ENCODE measurements at regions of chr2 and their contacts with region 1.

Region 1: DNA sequence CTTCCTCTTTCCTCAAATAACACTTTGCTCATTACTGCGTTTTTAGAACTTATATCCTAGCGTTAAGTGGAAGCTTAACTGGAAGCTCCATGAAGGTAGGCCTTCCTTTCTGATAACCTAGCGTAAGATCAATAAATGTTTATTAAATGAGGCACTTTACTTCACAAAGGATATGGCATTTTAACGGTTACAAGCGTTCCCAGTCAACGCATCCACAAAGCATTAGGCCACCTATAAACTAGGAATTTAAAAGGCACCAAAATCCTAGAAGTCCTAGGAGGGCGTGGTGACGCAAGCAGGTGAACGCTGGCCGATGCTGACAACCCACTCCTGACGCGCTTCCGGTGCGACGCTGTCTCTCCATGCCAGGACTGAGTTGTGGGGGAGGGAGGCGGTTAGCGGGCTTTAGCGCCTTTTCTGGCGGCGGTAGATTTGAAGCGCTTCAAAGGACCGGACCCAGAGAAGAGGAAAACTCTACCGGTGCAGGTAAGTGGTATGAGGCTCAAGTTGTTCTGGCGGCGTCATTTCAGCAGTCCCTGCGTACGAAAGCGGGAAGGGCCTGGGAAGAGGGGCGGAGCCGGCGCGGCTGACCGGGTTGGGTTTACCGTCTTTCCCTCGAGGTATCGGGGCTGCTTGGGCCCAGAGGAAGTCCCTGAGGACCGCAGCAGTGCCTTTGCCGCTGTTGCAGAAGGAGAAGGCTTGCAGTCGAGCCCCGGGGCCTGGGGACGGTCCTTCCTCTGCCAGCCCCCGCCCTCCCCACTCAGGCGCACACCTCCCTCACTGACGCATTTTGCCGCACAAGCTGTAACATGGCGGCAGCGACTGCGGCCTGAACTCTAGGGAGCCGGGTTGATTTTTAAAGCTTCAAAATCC is at the start of gene PPIG:
- DNase-seq: peak; percentile 95
- H3K4me3 Mint-ChIP-seq: peak within 1 kb of the TSS; percentile 95
- H3K27ac Mint-ChIP-seq: peak within 1 kb of the TSS; percentile 100
- H3K4me1 Mint-ChIP-seq: peaks cover 28% of the 10 kb centered on the region
- H3K27me3 Mint-ChIP-seq: peaks cover 5% of the 10 kb centered on the region
- total RNA-seq, gene PPIG: 59.9 and 69.3 TPM in 2 replicates

Region 2: DNA sequence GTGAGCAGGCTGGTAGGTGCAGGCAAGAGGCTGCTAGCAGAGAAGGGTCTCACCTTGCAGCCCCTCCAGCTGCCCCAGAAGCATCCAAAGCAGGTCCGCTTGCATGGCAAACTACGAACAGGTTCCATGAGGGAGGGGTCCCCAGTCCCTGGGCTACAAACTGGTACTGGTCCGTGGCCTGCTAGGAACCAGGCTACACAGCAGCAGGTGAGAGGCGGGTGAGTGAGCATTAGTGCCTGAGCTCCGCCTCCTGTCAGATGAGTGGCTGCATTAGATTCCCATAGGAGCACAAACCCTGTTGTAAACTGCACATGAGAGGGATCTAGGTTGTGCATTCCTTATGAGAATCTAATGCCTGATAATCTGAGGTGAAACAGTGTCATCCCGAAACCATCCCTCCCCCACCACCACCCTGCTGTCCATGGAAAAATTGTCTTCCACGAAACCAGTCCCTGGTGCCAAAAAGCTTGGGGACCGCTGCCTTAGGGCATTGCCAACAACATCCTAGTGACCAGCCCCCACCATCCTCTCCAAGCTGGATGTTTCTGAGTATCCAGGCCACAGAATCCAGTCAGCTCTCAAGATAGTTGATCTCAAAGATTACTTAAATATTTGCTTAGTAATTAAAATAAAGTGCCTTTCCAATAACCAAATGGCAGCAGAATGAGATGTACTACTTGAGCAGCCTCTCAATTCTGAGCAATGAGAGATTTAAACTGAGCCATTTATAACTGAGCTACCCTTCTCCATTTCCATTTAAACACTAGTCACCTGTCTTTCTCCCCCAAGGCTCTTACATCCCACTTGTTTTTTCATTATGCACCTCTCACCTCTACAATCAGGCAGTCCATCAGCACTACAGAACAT is 254.3 kb before region 1 on chr2:
- intact Hi-C with region 1: no loop called
- DNase-seq: no peak
- H3K4me3 Mint-ChIP-seq: no peak overlapping the region
- H3K27ac Mint-ChIP-seq: no peak overlapping the region
- H3K4me1 Mint-ChIP-seq: no peaks in the 10 kb centered on the region
- H3K27me3 Mint-ChIP-seq: peaks cover 4% of the 10 kb centered on the region

Region 3: DNA sequence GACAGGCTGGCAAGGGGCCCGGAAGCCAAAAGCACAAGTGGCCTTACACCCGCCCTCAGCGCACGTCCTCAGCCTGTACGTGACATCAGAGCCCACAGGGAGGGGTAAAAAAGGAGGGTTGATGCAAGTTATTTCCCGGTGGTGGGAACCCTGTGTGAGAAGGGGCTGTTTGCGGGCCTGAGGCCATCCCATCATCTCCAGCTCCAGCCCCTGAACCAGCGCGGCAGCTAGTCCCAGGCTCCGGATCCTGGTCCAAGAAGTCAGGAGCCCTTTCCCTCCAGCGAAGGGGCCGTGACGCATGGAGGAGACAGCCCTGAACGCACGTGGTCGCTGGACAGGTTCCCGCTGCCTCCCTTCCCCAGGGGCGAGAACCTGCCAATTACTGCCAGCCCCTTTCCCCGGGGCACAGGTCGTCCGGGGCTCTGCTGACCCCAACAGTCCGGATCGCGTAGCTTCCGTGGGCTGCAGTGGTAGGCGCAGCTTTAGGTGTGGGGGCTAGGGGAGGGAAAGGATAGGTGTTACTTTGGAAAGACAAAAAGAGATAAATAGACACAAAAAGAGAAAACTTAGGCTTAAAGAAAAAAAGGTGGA is 220.6 kb before region 1 on chr2:
- intact Hi-C with region 1: loop called (anchors 5 kb)
- DNase-seq: peak; percentile 86
- H3K4me3 Mint-ChIP-seq: peak overlapping the region; percentile 85
- H3K27ac Mint-ChIP-seq: peak overlapping the region; percentile 93
- H3K4me1 Mint-ChIP-seq: peaks cover 34% of the 10 kb centered on the region
- H3K27me3 Mint-ChIP-seq: peaks cover 53% of the 10 kb centered on the region

Region 4: GRCh38 chr2:169573160-169573973 is 10.9 kb before region 1 on chr2 and contains the start of gene FASTKD1:
- intact Hi-C with region 1: loop called (anchors 1 kb)
- DNase-seq: peak; percentile 95
- H3K4me3 Mint-ChIP-seq: peak within 1 kb of the TSS; percentile 94
- H3K27ac Mint-ChIP-seq: peak within 1 kb of the TSS; percentile 90
- H3K4me1 Mint-ChIP-seq: peaks cover 13% of the 10 kb centered on the region
- H3K27me3 Mint-ChIP-seq: peaks cover 2% of the 10 kb centered on the region
- total RNA-seq, gene FASTKD1: 55.2 and 56.5 TPM in 2 replicates

Region 5: GRCh38 chr2:169798718-169799592 is 214.7 kb after region 1 on chr2 and contains the start of gene SSB:
- intact Hi-C with region 1: loop called (anchors 1 kb)
- DNase-seq: peak; percentile 97
- H3K4me3 Mint-ChIP-seq: peak within 1 kb of the TSS; percentile 96
- H3K27ac Mint-ChIP-seq: peak within 1 kb of the TSS; percentile 96
- H3K4me1 Mint-ChIP-seq: peaks cover 20% of the 10 kb centered on the region
- H3K27me3 Mint-ChIP-seq: peaks cover 8% of the 10 kb centered on the region
- total RNA-seq, gene SSB: 113 TPM in 2 replicates

Region 6: DNA sequence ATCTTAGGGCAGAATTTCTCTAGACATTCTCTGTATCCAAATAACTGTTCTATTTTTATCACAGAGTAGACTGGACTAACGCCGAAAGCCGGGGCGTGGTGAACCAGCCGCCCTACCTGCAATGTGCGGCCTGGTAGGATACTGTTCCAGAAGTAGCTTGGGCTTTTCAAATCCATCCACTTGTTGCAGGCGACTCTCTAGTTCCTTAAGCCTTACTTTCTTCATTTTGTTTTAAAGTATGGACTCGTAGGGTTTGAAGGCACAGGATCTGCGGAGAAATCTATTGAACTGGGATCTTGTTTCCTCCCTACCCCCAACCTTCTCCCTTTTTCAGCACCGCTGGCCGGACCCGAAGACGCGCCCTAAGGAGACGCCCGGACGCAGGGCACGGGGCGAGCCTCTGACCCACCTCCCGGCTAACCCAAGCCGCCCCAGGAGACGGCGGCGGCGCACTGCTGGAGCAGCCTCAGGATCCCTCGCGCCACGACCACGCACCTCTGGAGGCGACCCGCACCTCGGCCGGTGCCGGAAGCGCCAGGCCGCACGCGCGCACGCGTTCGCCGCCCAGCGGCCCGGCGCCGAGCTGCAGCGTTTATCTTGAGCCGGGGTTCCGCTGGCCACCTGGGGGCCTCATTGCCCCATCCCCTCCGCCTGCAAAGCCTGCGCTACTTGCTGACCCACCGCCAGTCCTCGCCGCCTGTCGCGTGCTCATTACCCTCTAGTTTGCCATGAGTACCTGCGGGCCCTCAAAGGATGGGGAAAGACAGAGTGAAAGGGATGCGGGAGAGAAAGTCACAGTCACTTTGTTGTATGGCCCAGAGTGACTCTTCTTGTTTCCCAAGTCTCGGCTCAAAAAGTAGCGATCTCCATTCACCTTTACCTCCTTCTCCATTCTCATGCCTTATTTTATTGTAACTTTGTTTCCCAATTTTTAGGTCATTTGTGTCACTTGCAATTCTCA is 240.4 kb after region 1 on chr2 and contains the start of gene METTL5:
- intact Hi-C with region 1: loop called (anchors 2 kb)
- DNase-seq: peak; percentile 95
- H3K4me3 Mint-ChIP-seq: peak within 1 kb of the TSS; percentile 95
- H3K27ac Mint-ChIP-seq: peak within 1 kb of the TSS; percentile 88
- H3K4me1 Mint-ChIP-seq: peaks cover 44% of the 10 kb centered on the region
- H3K27me3 Mint-ChIP-seq: no peaks in the 10 kb centered on the region
- total RNA-seq, gene METTL5: 99.7 and 102 TPM in 2 replicates